ENCODE measurements at regions of chr5 and their contacts with region 1.

Region 1: GRCh38 chr5:132854301-132854700 is 12.0 kb downstream of the GDF9 start:
- DNase-seq: no peak
- ATAC-seq: no peak
- H3K4me3 Mint-ChIP-seq: no peak overlapping the region
- H3K27ac Mint-ChIP-seq: no peak overlapping the region
- H3K4me1 Mint-ChIP-seq: peaks cover 5% of the 10 kb centered on the region
- H3K27me3 Mint-ChIP-seq: peaks cover 10% of the 10 kb centered on the region

Region 2: DNA sequence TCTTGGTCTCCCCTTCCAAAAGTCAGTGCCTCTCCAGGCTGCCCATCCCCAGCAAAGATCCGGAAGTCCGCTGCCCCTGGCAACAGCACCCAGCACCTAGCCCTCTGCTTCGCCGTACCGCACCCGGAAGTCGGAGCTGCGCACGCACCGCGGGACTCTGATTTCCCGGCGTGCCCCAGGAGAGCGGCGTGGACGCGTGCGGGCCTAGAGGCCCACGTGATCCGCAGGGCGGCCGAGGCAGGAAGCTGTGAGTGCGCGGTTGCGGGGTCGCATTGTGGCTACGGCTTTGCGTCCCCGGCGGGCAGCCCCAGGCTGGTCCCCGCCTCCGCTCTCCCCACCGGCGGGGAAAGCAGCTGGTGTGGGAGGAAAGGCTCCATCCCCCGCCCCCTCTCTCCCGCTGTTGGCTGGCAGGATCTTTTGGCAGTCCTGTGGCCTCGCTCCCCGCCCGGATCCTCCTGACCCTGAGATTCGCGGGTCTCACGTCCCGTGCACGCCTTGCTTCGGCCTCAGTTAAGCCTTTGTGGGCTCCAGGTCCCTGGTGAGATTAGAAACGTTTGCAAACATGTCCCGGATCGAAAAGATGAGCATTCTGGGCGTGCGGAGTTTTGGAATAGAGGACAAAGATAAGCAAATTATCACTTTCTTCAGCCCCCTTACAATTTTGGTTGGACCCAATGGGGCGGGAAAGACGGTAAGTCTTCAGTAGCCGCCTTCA is 297.4 kb before region 1 on chr5 and contains the start of gene RAD50:
- CTCF ChIA-PET with region 1: no interaction called
- POLR2A ChIA-PET with region 1: interaction called, 10 read pairs
- DNase-seq: peak; percentile 96
- ATAC-seq: peak; percentile 97
- H3K4me3 Mint-ChIP-seq: peak within 1 kb of the TSS; percentile 98
- H3K27ac Mint-ChIP-seq: peak within 1 kb of the TSS; percentile 98
- H3K4me1 Mint-ChIP-seq: peaks cover 23% of the 10 kb centered on the region
- H3K27me3 Mint-ChIP-seq: no peaks in the 10 kb centered on the region
- total RNA-seq, gene RAD50: 30.4 to 34.5 TPM

Region 3: GRCh38 chr5:132692632-132692967 is 161.7 kb before region 1 on chr5:
- CTCF ChIA-PET with region 1: no interaction called
- POLR2A ChIA-PET with region 1: no interaction called
- DNase-seq: no peak
- ATAC-seq: no peak
- H3K4me3 Mint-ChIP-seq: no peak overlapping the region
- H3K27ac Mint-ChIP-seq: peak overlapping the region; percentile 53
- H3K4me1 Mint-ChIP-seq: peaks cover 36% of the 10 kb centered on the region
- H3K27me3 Mint-ChIP-seq: no peaks in the 10 kb centered on the region

Region 4: GRCh38 chr5:132746954-132747615 is 107.2 kb before region 1 on chr5 and contains the start of gene CCNI2:
- CTCF ChIA-PET with region 1: no interaction called
- POLR2A ChIA-PET with region 1: no interaction called
- DNase-seq: peak; percentile 69
- ATAC-seq: peak; percentile 88
- H3K4me3 Mint-ChIP-seq: peak within 1 kb of the TSS; percentile 71
- H3K27ac Mint-ChIP-seq: peak within 1 kb of the TSS; percentile 73
- H3K4me1 Mint-ChIP-seq: peaks cover 32% of the 10 kb centered on the region
- H3K27me3 Mint-ChIP-seq: peaks cover 5% of the 10 kb centered on the region
- total RNA-seq, gene CCNI2: 8.3 to 9.5 TPM